Activated CD8-positive, alpha-beta T cell treated with anti-CD3 and anti-CD28 coated beads for 36 hours (primary cell): ENCODE measurements at regions of chrX and their contacts with region 1.

Region 1: GRCh38 chrX:107776649-107777535 is 641 bp upstream of the NCBP2L start:
- DNase-seq: peak; percentile 92
- ATAC-seq: peak; percentile 77
- H3K4me3 Mint-ChIP-seq: peak overlapping the region; percentile 82
- H3K27ac Mint-ChIP-seq: peak overlapping the region; percentile 85
- H3K4me1 Mint-ChIP-seq: peaks cover 10% of the 10 kb centered on the region
- H3K27me3 Mint-ChIP-seq: no peaks in the 10 kb centered on the region
- CTCF ChIP-seq: peak; percentile 62

Region 2: GRCh38 chrX:107450823-107451509 is 325.9 kb before region 1 on chrX:
- CTCF ChIA-PET with region 1: interaction called, 3 read pairs
- POLR2A ChIA-PET with region 1: no interaction called
- intact Hi-C with region 1: loop called (anchors 10 kb)
- DNase-seq: peak; percentile 30
- ATAC-seq: peak; percentile 26
- H3K4me3 Mint-ChIP-seq: peak overlapping the region; percentile 51
- H3K27ac Mint-ChIP-seq: no peak overlapping the region
- H3K4me1 Mint-ChIP-seq: peaks cover 16% of the 10 kb centered on the region
- H3K27me3 Mint-ChIP-seq: peaks cover 40% of the 10 kb centered on the region
- CTCF ChIP-seq: no peak

Region 3: GRCh38 chrX:107627838-107628661 is 148.8 kb before region 1 on chrX and contains the start of gene PRPS1:
- CTCF ChIA-PET with region 1: interaction called, 14 read pairs
- POLR2A ChIA-PET with region 1: no interaction called
- intact Hi-C with region 1: no loop called
- DNase-seq: peak; percentile 94
- ATAC-seq: peak; percentile 99
- H3K4me3 Mint-ChIP-seq: peak within 1 kb of the TSS; percentile 86
- H3K27ac Mint-ChIP-seq: peak within 1 kb of the TSS; percentile 95
- H3K4me1 Mint-ChIP-seq: peaks cover 23% of the 10 kb centered on the region
- H3K27me3 Mint-ChIP-seq: no peaks in the 10 kb centered on the region
- CTCF ChIP-seq: no peak
- total RNA-seq, gene PRPS1: 122 to 131 TPM

Region 4: GRCh38 chrX:107654872-107655761 is 121.8 kb before region 1 on chrX:
- CTCF ChIA-PET with region 1: interaction called, 181 read pairs
- POLR2A ChIA-PET with region 1: interaction called, 3 read pairs
- intact Hi-C with region 1: loop called (anchors 1 kb)
- DNase-seq: peak; percentile 67
- ATAC-seq: peak; percentile 94
- H3K4me3 Mint-ChIP-seq: no peak overlapping the region
- H3K27ac Mint-ChIP-seq: peak overlapping the region; percentile 73
- H3K4me1 Mint-ChIP-seq: peaks cover 14% of the 10 kb centered on the region
- H3K27me3 Mint-ChIP-seq: no peaks in the 10 kb centered on the region
- CTCF ChIP-seq: peak; percentile 72

Region 5: GRCh38 chrX:107716816-107717700 is 59.8 kb before region 1 on chrX:
- CTCF ChIA-PET with region 1: interaction called, 68 read pairs
- POLR2A ChIA-PET with region 1: no interaction called
- intact Hi-C with region 1: loop called (anchors 10 kb)
- DNase-seq: peak; percentile 88
- ATAC-seq: peak; percentile 79
- H3K4me3 Mint-ChIP-seq: peak overlapping the region; percentile 89
- H3K27ac Mint-ChIP-seq: peak overlapping the region; percentile 85
- H3K4me1 Mint-ChIP-seq: peaks cover 55% of the 10 kb centered on the region
- H3K27me3 Mint-ChIP-seq: no peaks in the 10 kb centered on the region
- CTCF ChIP-seq: no peak

Region 6: DNA sequence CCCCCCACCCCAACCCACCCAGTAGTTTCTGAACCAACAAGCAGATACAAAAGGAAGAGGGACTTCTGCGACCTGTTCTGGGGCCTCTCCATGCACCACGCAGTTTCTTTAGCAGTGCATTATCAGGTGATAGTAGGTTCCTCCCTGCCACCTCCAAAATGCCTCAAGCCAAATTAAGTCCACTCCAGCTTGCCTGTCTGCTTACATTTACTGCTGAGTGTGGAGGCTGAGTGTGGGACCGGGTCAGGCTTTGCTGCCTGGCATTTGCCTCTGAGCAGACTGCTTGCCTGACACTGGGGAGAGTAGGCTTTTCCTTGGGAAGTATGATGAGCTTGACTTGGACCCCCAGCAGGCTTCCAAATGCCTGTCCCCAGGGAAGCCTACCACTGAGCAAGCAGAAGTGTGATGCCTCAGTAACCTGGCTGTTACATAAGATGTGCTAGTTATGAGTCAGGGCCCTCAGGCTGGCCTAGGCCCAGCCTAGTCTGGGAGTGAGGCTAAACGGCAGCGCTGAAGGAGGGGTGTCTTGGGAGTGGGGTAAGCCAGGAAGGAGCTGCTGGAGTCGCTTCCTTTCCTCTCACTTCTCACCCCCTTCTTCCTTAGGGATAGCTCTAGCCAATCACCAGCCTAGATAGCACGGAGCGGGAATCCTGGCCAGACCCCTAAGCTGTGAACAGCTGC is 10.3 kb before region 1 on chrX:
- CTCF ChIA-PET with region 1: interaction called, 10 read pairs
- POLR2A ChIA-PET with region 1: interaction called, 4 read pairs
- intact Hi-C with region 1: no loop called
- DNase-seq: no peak
- ATAC-seq: no peak
- H3K4me3 Mint-ChIP-seq: no peak overlapping the region
- H3K27ac Mint-ChIP-seq: no peak overlapping the region
- H3K4me1 Mint-ChIP-seq: peaks cover 4% of the 10 kb centered on the region
- H3K27me3 Mint-ChIP-seq: no peaks in the 10 kb centered on the region
- CTCF ChIP-seq: no peak

Region 7: GRCh38 chrX:107834275-107835201 is 57.6 kb after region 1 on chrX:
- CTCF ChIA-PET with region 1: no interaction called
- POLR2A ChIA-PET with region 1: no interaction called
- intact Hi-C with region 1: no loop called
- DNase-seq: no peak
- ATAC-seq: no peak
- H3K4me3 Mint-ChIP-seq: no peak overlapping the region
- H3K27ac Mint-ChIP-seq: no peak overlapping the region
- H3K4me1 Mint-ChIP-seq: peaks cover 16% of the 10 kb centered on the region
- H3K27me3 Mint-ChIP-seq: no peaks in the 10 kb centered on the region
- CTCF ChIP-seq: no peak

Region 8: DNA sequence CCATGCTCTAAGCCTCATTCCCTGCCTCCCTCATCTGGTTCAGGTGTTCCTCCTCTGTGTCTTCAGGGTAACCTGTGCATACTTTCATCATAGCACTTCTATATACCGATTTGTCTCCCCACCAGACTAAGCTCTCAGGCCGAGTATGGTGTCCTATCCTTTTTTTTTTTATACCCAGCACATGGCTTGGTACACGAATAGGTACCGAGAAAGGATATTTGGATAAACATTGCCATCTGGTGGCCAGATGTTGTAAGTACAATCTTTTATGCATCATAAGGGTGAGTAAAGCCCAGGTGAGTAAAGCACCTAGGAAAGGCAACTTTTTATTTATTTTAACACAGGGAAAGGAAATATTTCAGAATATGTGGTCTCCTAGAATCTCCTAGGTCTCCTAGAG is 117.1 kb after region 1 on chrX:
- CTCF ChIA-PET with region 1: interaction called, 4 read pairs
- POLR2A ChIA-PET with region 1: no interaction called
- intact Hi-C with region 1: loop called (anchors 5 kb)
- DNase-seq: peak; percentile 13
- ATAC-seq: peak; percentile 85
- H3K4me3 Mint-ChIP-seq: no peak overlapping the region
- H3K27ac Mint-ChIP-seq: no peak overlapping the region
- H3K4me1 Mint-ChIP-seq: peaks cover 2% of the 10 kb centered on the region
- H3K27me3 Mint-ChIP-seq: no peaks in the 10 kb centered on the region
- CTCF ChIP-seq: peak; percentile 50